Left ventricle myocardium superior (tissue), 1 donor: ENCODE measurements at regions of chr6 and their contacts with region 1.

Region 1: GRCh38 chr6:157756708-157757429 is 66.2 kb upstream of the SNX9 start:
- DNase-seq: peak; percentile 90
- ATAC-seq: peak; percentile 92

Region 2: DNA sequence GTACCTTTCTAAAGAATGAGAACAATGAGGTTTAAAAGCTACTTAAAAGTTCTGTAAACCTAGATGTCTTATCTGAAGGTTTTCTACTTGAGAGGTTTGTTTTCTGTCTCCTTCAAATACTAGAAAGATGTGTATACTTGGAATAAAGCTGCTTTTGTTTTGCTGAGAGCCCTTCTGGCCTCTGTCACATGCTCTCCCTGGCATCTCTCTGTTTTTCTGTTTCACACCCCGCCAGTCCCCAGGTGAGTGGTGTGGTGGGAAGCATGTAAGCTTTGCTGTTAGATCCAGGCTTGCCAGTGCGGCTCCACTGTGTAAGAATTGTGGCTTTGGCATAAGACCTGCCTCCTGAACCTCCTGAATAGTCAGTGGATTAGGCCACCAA is 123.0 kb after region 1 on chr6:
- intact Hi-C with region 1: loop called (anchors 10 kb)
- DNase-seq: no peak
- ATAC-seq: peak; percentile 20

Region 3: DNA sequence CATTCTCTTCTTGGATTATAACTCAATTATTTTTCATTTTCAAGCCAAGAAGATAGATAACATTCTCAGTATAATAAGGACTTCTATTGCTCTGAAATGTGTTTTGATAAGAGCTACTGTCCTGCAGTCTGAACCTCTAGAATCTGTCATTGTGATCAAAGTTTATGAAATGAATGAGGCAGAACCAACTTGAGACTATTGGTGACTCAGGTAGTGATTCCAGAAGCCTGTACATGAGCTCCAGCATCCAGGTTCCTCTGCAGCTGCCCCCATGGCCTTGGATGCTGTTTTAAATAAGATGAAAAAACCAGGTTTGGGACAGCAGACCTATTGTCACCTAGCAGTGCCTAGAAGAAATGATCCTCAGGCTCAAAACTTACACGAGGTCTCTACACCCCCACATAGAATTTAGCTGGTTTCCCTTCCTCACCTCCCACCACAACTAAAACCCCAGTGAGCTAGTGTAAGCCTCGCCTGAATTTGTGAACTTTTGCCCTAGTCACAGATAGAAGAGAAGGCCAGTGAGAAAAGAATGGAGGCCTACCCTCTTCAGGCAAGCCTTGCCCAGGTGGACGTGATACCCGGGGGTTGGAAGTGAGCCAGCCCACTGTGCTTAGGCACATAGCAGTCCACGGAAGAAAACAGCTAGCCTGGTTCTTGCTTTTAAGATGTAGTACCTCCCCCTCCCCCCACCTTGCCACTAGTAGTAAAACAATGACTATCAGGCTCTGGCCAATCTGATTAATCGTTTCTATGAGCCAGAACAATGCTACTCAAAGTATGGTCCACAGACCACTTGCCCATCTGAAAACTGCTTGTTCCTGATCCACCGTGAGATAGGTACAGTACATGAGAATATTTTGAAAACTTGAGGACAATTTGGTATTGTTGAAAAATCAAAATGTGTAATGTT is 151.8 kb after region 1 on chr6:
- intact Hi-C with region 1: no loop called
- DNase-seq: no peak
- ATAC-seq: no peak